ENCODE measurements at regions of chr12 and their contacts with region 1.

Region 1: DNA sequence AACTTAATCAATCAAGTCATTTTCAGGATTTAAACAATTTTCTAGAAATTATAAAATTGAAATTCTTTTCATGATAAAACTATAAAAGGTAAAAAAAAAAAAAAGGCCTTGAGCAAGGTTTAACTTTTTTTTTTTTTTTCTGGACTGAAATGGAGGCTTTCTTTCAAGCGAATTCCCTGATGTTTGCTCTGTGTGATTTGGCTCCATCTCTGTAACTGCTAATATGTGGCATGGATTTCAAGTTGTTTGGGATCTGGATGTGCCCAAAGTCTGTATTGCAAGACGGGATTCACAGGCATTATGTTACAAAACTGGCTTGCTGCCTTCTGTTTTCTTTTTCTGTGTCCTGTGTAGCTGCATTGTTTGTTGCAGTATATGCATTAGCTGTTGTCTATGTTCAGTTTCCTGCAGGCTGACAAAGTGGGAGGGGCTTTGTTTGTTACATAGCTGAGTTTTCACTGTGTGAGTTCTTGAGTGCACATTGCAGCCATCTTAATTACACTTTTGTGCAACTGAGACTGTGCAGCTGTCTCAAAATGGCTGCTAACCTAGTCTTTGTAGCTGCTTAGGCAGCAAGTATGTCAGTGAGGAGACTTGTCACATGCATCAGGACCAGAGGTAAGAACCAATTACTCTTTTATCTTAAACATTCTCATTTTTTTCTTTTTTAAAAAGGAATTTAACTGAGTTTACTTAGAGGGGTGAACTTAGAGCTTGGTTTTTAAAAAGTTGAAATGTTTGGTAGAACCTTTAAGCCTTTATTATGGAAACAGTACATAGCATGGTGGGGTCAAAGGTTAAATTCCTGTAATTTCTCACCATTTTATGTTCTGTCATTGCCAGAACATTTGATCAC is 19.5 kb downstream of the ATF7IP start:
- DNase-seq: peak; percentile 65
- H3K4me3 Mint-ChIP-seq: peak overlapping the region; percentile 64
- H3K27ac Mint-ChIP-seq: peak overlapping the region; percentile 84
- H3K4me1 Mint-ChIP-seq: peaks cover 15% of the 10 kb centered on the region
- H3K27me3 Mint-ChIP-seq: no peaks in the 10 kb centered on the region
- CTCF ChIP-seq: no peak

Region 2: DNA sequence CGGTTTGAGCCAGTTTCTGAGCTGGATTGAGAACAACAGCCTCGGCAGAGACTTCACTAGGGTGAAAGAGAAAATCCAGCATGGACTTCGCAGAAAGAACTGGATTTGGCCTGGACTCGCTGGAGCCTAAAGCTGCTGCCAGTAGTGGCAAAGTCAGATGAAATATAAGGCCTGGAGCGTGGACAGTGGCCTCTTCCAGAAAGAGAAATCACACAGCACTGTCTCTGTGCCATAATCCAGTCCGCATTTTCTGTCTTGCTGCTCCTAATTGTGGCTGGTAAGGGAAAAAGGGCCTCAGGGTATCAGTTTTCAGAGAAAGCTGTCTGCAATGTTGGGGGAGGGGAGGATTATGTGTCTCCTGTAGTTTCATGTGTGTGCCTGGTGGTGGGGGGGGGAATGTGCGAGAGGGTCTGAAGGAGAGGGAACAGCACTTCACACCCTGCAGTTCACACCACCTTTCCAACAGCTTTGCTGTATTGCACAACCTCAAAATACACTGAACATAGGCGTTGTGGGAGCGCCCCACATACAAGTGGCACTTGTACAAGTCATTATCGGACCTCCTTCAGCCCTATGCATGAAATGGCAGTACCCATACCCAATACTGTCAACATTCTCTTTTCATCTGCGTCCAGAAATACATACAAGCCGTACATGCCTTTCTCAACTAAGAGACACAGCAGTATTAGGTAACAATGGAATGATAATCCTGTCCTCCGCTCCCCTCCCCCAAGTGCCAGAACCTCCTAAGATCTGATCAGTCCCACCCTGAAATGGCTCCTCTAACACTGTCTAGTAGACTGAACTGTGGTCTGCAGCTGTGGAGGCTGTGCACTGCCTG is 127.1 kb before region 1 on chr12:
- CTCF ChIA-PET with region 1: no interaction called
- intact Hi-C with region 1: loop called (anchors 1 kb)
- DNase-seq: peak; percentile 95
- H3K4me3 Mint-ChIP-seq: peak overlapping the region; percentile 24
- H3K27ac Mint-ChIP-seq: peak overlapping the region; percentile 95
- H3K4me1 Mint-ChIP-seq: peaks cover 64% of the 10 kb centered on the region
- H3K27me3 Mint-ChIP-seq: no peaks in the 10 kb centered on the region
- CTCF ChIP-seq: no peak

Region 3: GRCh38 chr12:14403711-14404196 is 18.7 kb after region 1 on chr12:
- CTCF ChIA-PET with region 1: no interaction called
- intact Hi-C with region 1: loop called (anchors 2 kb)
- DNase-seq: peak; percentile 43
- H3K4me3 Mint-ChIP-seq: no peak overlapping the region
- H3K27ac Mint-ChIP-seq: peak overlapping the region; percentile 34
- H3K4me1 Mint-ChIP-seq: peaks cover 37% of the 10 kb centered on the region
- H3K27me3 Mint-ChIP-seq: no peaks in the 10 kb centered on the region
- CTCF ChIP-seq: no peak

Region 4: GRCh38 chr12:14567351-14568162 is 182.5 kb after region 1 on chr12 and contains the start of gene PLBD1:
- CTCF ChIA-PET with region 1: no interaction called
- intact Hi-C with region 1: loop called (anchors 10 kb)
- DNase-seq: peak; percentile 69
- H3K4me3 Mint-ChIP-seq: peak within 1 kb of the TSS; percentile 95
- H3K27ac Mint-ChIP-seq: peak within 1 kb of the TSS; percentile 97
- H3K4me1 Mint-ChIP-seq: peaks cover 37% of the 10 kb centered on the region
- H3K27me3 Mint-ChIP-seq: no peaks in the 10 kb centered on the region
- CTCF ChIP-seq: no peak
- total RNA-seq, gene PLBD1: 75.3 and 98.1 TPM in 2 replicates

Measured in Calu3 (cell line).